Head of caudate nucleus (tissue), 42 donors: ENCODE measurements at regions of chr19 and their contacts with region 1.

Region 1: DNA sequence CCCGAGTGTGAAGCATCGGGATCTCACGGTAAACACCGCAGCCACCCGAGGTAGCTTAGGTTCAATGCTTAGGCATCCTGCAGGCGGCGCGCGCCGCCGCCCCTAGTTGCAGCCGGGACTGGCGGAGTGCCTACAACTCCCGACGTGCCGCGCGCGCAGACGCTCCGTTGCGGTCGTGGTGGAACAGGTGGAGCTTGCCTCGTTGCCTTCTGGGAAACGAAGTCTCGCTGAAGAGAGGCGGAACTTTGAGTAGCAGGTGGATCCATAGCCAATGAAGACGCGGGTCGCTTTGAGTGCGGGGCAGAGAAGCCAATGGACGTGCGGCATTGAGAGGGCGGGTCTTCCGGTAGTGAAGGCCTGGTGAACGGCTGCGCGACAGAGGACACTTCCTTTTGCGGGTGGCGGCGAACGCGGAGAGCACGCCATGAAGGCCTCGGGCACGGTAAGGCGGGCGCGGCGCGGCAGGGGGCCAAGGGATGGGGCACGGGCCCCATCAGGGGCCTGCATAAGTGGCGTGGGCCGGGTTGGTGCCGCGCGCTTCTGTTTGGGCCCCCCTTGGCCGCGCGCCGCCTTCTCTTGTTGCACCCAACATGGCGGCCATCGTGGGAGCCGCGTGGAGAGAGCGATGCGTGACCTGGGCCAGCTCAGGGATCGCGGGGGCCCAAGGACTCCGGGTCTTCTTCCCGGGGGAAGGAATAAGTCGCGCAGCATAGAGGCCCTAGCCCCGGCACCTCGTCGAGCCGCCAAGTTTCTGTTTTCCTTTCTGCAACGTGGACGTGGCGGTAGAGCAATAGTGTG is at the start of gene RPL18A:
- DNase-seq: peak; percentile 99 to 100 (median 100)

Region 2: GRCh38 chr19:17703824-17704463 is 155.8 kb before region 1 on chr19:
- intact Hi-C with region 1: loop called (anchors 10 kb)
- DNase-seq: peak; percentile 57 to 89 (median 76)

Region 3: GRCh38 chr19:17902701-17903100 is 43.0 kb after region 1 on chr19:
- intact Hi-C with region 1: no loop called
- DNase-seq: no peak

Region 4: DNA sequence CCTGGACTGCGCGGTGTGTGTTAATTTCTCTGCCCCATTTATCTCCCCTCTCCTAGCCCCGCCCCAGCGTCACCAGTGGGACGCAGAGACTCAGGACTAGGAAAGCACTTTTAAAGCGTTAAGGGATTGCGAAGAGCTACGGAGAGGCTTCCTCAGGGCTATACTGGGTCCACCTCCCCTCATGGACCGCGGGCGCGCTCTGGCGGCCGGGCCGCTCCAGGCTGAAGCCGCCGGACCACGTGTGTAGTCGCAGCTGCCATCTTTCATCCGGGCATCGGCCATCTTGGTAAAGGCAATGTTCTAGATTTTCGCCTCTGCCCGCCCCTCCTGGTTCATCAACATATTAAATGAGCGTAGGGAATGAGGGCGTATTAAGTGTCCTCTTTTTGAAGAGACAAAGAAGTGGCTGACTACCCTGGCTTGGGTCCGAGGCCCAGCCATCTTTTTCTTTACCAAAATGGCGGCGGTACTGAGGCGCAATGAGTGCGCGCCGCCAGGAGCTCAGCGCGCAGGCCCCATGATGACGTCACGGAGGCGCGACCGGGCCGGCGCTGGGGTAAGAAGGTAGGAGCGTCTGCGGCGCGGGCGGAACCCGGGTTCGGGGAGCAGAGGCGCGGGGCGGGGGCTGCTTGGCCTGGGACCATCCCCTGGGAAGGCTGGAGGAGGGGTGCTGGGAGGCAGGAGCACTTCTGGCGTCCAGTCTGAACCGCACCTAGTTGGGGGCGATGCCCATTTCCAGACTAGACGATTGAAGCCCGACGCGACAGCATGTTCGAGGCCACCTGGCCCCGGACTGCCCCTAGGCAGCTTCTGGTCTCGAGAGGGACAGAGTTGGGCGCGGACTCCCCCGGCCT is 73.0 kb after region 1 on chr19 and contains the start of gene CCDC124:
- intact Hi-C with region 1: loop called (anchors 1 kb)
- DNase-seq: peak; percentile 74 to 95 (median 89)

Region 5: GRCh38 chr19:17996826-17997316 is 137.1 kb after region 1 on chr19:
- intact Hi-C with region 1: loop called (anchors 5 kb)
- DNase-seq: peak; percentile 67 to 96 (median 89)